Activated B cell treated with CpG ODN at 0.5 μM for 24 hours (primary cell): ENCODE measurements at regions of chr11 and their contacts with region 1.

Region 1: DNA sequence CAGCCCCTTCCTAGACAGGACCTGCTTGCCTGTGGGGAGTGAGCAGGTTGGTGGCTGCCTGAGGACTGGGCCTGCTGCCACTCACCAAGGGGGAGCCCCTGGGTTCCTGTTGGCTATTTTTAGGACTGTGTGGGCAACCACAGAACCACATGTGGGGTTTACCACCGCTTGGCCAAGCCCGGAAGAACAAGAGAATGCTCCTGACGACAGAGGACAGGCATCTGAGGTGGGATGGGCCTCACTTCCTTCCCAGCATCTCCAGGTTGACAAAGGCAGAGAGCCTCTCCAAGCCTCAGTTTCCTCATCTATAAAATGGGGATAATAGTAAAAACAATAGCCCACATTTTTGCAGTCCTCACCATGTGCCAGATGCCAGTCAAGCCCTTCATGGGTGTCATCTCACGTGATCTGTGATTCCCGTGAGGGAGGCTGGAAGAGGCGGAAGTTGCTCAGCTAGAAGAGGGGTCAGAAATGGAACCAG is 43.6 kb downstream of the LRRC32 start:
- DNase-seq: peak; percentile 79
- ATAC-seq: peak; percentile 59
- H3K4me3 Mint-ChIP-seq: peak overlapping the region; percentile 74
- H3K27ac Mint-ChIP-seq: peak overlapping the region; percentile 89
- H3K4me1 Mint-ChIP-seq: peaks cover 64% of the 10 kb centered on the region
- H3K27me3 Mint-ChIP-seq: peaks cover 26% of the 10 kb centered on the region
- CTCF ChIP-seq: no peak

Region 2: DNA sequence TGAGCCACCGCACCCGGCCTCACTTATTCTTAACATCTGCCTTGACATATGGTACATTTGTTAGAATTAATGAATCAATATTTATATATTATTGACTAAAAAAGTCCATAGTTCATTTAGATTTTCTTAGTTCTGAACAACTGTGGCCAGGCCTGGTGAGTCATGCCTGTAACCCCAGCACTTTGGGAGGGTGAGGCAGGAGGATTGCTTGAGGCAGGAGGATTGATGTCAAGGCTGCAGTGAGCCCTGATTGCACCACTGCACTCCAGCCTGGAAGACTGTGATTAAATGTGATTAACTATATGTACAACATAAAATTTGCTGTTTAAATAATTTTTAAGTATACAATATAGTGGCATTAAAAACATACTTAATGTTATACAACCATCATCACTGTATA is 806.3 kb before region 1 on chr11:
- CTCF ChIA-PET with region 1: no interaction called
- POLR2A ChIA-PET with region 1: no interaction called
- intact Hi-C with region 1: loop called (anchors 5 kb)
- DNase-seq: no peak
- ATAC-seq: no peak
- H3K4me3 Mint-ChIP-seq: no peak overlapping the region
- H3K27ac Mint-ChIP-seq: peak overlapping the region; percentile 76
- H3K4me1 Mint-ChIP-seq: peaks cover 71% of the 10 kb centered on the region
- H3K27me3 Mint-ChIP-seq: no peaks in the 10 kb centered on the region
- CTCF ChIP-seq: no peak

Region 3: GRCh38 chr11:76588455-76589325 is 38.3 kb before region 1 on chr11:
- CTCF ChIA-PET with region 1: no interaction called
- POLR2A ChIA-PET with region 1: no interaction called
- intact Hi-C with region 1: loop called (anchors 5 kb)
- DNase-seq: no peak
- ATAC-seq: peak; percentile 79
- H3K4me3 Mint-ChIP-seq: no peak overlapping the region
- H3K27ac Mint-ChIP-seq: peak overlapping the region; percentile 70
- H3K4me1 Mint-ChIP-seq: peaks cover 17% of the 10 kb centered on the region
- H3K27me3 Mint-ChIP-seq: no peaks in the 10 kb centered on the region
- CTCF ChIP-seq: no peak

Region 4: DNA sequence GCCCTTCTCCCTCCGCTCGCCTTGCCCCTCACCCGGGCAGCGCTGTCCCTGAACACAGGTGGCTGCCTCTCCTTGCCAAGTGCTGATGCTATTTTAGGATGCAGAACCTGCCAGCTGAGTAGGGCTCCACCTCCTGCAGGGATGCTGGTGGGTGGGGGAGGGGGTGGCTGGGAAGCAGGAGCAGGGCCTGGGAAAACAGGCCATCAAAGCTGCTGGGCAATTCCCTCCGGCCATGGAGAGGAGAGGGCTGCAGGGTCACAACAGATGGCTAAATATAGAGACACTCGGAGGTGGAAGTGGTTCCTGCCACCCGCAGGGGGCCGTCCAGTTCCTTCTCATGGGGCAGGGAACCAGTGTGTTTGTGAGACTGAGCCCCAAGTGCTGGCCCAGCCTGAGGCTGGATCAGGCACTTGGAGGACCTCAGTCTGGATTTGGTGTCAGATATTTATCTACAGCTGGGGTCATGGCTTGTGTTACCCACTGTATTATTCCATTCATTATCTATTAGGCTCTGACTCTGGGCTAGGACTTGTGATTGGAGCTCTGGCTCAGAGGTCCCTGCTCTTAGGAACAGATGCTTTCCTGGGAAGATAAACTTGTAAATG is 16.0 kb before region 1 on chr11:
- CTCF ChIA-PET with region 1: no interaction called
- POLR2A ChIA-PET with region 1: interaction called, 3 read pairs
- intact Hi-C with region 1: loop called (anchors 1 kb)
- DNase-seq: no peak
- ATAC-seq: no peak
- H3K4me3 Mint-ChIP-seq: no peak overlapping the region
- H3K27ac Mint-ChIP-seq: no peak overlapping the region
- H3K4me1 Mint-ChIP-seq: peaks cover 32% of the 10 kb centered on the region
- H3K27me3 Mint-ChIP-seq: peaks cover 27% of the 10 kb centered on the region
- CTCF ChIP-seq: no peak

Region 5: DNA sequence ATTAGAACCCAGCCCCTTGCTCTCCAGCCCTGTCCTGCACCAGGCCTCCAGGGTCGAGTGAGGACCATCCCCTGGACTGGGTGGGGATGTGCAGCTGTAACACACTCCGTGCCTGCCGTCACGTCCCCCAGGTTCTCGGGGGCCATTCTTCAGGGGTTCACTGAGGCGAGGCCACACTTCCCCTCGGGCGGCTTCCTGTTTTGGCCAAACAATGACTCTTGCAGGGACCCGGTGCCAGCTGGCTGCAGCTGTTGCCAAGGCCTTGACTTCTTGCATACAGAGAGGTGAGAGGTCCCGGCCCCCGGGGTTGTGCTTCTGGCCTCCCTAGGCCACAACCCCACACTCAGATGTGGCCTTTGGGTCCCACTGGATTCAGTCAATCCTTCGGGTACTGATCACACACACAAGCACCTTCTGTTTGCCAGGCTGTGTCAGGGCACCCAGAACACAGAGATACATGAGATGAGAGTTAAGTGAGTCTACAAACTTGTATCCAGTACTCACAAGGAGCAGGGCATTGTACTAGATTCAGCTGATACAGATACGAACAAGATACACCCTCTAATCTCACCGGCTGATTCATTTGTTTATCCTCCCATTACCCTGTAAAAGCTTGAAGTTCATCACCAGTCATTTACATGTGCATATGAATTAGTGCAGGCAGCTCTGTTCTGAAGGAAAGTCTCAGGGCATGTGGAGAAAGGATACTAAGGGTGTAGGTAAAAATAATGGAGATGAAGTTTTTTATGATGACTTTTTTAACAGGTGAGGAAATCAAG is 10.7 kb after region 1 on chr11:
- CTCF ChIA-PET with region 1: interaction called, 6 read pairs
- POLR2A ChIA-PET with region 1: interaction called, 26 read pairs
- intact Hi-C with region 1: loop called (anchors 1 kb)
- DNase-seq: peak; percentile 64
- ATAC-seq: peak; percentile 90
- H3K4me3 Mint-ChIP-seq: peak overlapping the region; percentile 50
- H3K27ac Mint-ChIP-seq: peak overlapping the region; percentile 85
- H3K4me1 Mint-ChIP-seq: peaks cover 67% of the 10 kb centered on the region
- H3K27me3 Mint-ChIP-seq: peaks cover 9% of the 10 kb centered on the region
- CTCF ChIP-seq: no peak